ENCODE measurements at regions of chr9 and their contacts with region 1.

Region 1: DNA sequence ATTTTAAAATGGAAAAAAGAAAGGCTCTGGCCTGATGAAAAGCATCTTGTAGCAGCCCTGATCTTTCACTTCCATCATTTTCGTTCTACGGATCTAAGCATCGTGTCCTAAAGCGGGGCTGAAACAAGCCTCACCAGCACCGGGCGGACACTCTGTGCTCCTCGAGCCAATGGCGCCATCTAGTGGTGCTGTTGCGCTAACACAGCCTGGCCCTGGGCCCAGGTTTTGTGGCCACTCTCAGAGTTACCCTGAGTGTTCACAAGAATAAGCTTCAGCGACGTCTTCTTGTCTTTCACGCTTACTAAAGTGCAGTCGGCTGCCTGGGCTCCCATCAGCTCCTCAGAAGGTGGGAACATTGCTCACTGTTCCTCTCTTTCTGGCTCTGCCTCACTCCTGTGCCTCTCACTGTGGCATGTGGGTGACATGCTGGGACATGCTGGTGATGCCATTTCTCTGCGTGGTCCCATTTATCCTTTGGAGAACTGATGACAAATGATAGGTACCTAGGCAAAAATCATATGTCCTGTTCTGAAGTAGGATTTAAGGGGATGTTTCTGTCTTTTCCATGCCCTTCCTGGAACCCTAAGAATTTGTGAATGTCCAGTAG is 32.7 kb downstream of the DMRT3 start:
- DNase-seq: peak; percentile 56 to 81
- H3K4me3 ChIP-seq: no peak overlapping the region
- H3K4me3 Mint-ChIP-seq: no peak overlapping the region
- H3K27ac Mint-ChIP-seq: no peak overlapping the region
- H3K4me1 ChIP-seq: no peaks in the 10 kb centered on the region
- H3K4me1 Mint-ChIP-seq: no peaks in the 10 kb centered on the region
- H3K27me3 ChIP-seq: no peaks in the 10 kb centered on the region
- H3K27me3 Mint-ChIP-seq: peaks cover 3% of the 10 kb centered on the region
- CTCF ChIP-seq: peak; percentile 89 to 92

Region 2: GRCh38 chr9:347667-348292 is 661.4 kb before region 1 on chr9:
- CTCF ChIA-PET with region 1: no interaction called
- POLR2A ChIA-PET with region 1: no interaction called
- intact Hi-C with region 1: loop called (anchors 10 kb)
- DNase-seq: peak in 1 of 2 experiments; percentile 49
- H3K4me3 ChIP-seq: no peak overlapping the region
- H3K4me3 Mint-ChIP-seq: no peak overlapping the region
- H3K27ac Mint-ChIP-seq: no peak overlapping the region
- H3K4me1 ChIP-seq: no peaks in the 10 kb centered on the region
- H3K4me1 Mint-ChIP-seq: no peaks in the 10 kb centered on the region
- H3K27me3 ChIP-seq: no peaks in the 10 kb centered on the region
- H3K27me3 Mint-ChIP-seq: no peaks in the 10 kb centered on the region
- CTCF ChIP-seq: peak; percentile 67 to 77

Region 3: GRCh38 chr9:806285-807156 is 202.7 kb before region 1 on chr9:
- CTCF ChIA-PET with region 1: no interaction called
- POLR2A ChIA-PET with region 1: no interaction called
- intact Hi-C with region 1: loop called (anchors 5 kb)
- DNase-seq: peak in 1 of 2 experiments; percentile 27
- H3K4me3 ChIP-seq: no peak overlapping the region
- H3K4me3 Mint-ChIP-seq: no peak overlapping the region
- H3K27ac Mint-ChIP-seq: no peak overlapping the region
- H3K4me1 ChIP-seq: no peaks in the 10 kb centered on the region
- H3K4me1 Mint-ChIP-seq: peaks cover 5% of the 10 kb centered on the region
- H3K27me3 ChIP-seq: no peaks in the 10 kb centered on the region
- H3K27me3 Mint-ChIP-seq: no peaks in the 10 kb centered on the region
- CTCF ChIP-seq: peak; percentile 58 to 63

Region 4: GRCh38 chr9:826500-827280 is 182.5 kb before region 1 on chr9:
- CTCF ChIA-PET with region 1: no interaction called
- POLR2A ChIA-PET with region 1: no interaction called
- intact Hi-C with region 1: no loop called
- DNase-seq: no peak
- H3K4me3 ChIP-seq: no peak overlapping the region
- H3K4me3 Mint-ChIP-seq: no peak overlapping the region
- H3K27ac Mint-ChIP-seq: no peak overlapping the region
- H3K4me1 ChIP-seq: no peaks in the 10 kb centered on the region
- H3K4me1 Mint-ChIP-seq: no peaks in the 10 kb centered on the region
- H3K27me3 ChIP-seq: no peaks in the 10 kb centered on the region
- H3K27me3 Mint-ChIP-seq: no peaks in the 10 kb centered on the region
- CTCF ChIP-seq: no peak

Region 5: GRCh38 chr9:893843-894420 is 115.3 kb before region 1 on chr9:
- CTCF ChIA-PET with region 1: interaction called, 13 read pairs
- POLR2A ChIA-PET with region 1: no interaction called
- intact Hi-C with region 1: loop called (anchors 1 kb)
- DNase-seq: peak; percentile 66
- H3K4me3 ChIP-seq: no peak overlapping the region
- H3K4me3 Mint-ChIP-seq: no peak overlapping the region
- H3K27ac Mint-ChIP-seq: no peak overlapping the region
- H3K4me1 ChIP-seq: no peaks in the 10 kb centered on the region
- H3K4me1 Mint-ChIP-seq: peaks cover 6% of the 10 kb centered on the region
- H3K27me3 ChIP-seq: no peaks in the 10 kb centered on the region
- H3K27me3 Mint-ChIP-seq: no peaks in the 10 kb centered on the region
- CTCF ChIP-seq: peak; percentile 67 to 76

Region 6: GRCh38 chr9:899440-900184 is 109.6 kb before region 1 on chr9:
- CTCF ChIA-PET with region 1: interaction called, 13 read pairs
- POLR2A ChIA-PET with region 1: no interaction called
- intact Hi-C with region 1: loop called (anchors 1 kb)
- DNase-seq: peak in 1 of 2 experiments; percentile 35
- H3K4me3 ChIP-seq: no peak overlapping the region
- H3K4me3 Mint-ChIP-seq: peak overlapping the region; percentile 31
- H3K27ac Mint-ChIP-seq: no peak overlapping the region
- H3K4me1 ChIP-seq: peaks cover 4% of the 10 kb centered on the region; the same call in 1 of the 2 replicates
- H3K4me1 Mint-ChIP-seq: peaks cover 6% of the 10 kb centered on the region
- H3K27me3 ChIP-seq: no peaks in the 10 kb centered on the region
- H3K27me3 Mint-ChIP-seq: no peaks in the 10 kb centered on the region
- CTCF ChIP-seq: no peak

Region 7: DNA sequence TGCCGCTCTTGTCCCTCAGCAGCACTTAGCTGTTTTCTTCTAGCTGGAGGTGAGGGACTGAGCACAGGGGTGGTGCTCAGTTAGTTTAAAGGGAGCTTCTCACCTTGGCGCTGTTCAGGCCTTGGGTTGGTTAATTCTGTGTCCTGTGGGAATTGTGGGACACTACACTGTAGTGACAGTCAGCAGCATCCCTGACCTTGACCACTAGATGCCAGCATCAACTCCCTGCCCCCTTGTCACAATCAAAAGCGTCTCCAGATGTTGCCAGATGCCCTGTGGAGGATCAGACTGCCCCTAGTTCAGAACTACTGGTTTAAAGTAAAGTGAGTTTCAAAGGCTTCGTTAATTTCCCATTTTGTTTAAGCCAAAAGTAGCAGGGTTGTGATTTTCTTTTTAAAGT is 98.2 kb before region 1 on chr9:
- CTCF ChIA-PET with region 1: no interaction called
- POLR2A ChIA-PET with region 1: no interaction called
- intact Hi-C with region 1: loop called (anchors 5 kb)
- DNase-seq: peak; percentile 31 to 42
- H3K4me3 ChIP-seq: no peak overlapping the region
- H3K4me3 Mint-ChIP-seq: no peak overlapping the region
- H3K27ac Mint-ChIP-seq: no peak overlapping the region
- H3K4me1 ChIP-seq: no peaks in the 10 kb centered on the region
- H3K4me1 Mint-ChIP-seq: no peaks in the 10 kb centered on the region
- H3K27me3 ChIP-seq: no peaks in the 10 kb centered on the region; the same call in 1 of the 2 replicates
- H3K27me3 Mint-ChIP-seq: peaks cover 7% of the 10 kb centered on the region
- CTCF ChIP-seq: peak in 1 of 2 experiments; percentile 25

Region 8: GRCh38 chr9:942805-943580 is 66.2 kb before region 1 on chr9:
- CTCF ChIA-PET with region 1: no interaction called
- POLR2A ChIA-PET with region 1: no interaction called
- intact Hi-C with region 1: no loop called
- DNase-seq: no peak
- H3K4me3 ChIP-seq: no peak overlapping the region
- H3K4me3 Mint-ChIP-seq: no peak overlapping the region
- H3K27ac Mint-ChIP-seq: no peak overlapping the region
- H3K4me1 ChIP-seq: no peaks in the 10 kb centered on the region
- H3K4me1 Mint-ChIP-seq: no peaks in the 10 kb centered on the region
- H3K27me3 ChIP-seq: no peaks in the 10 kb centered on the region
- H3K27me3 Mint-ChIP-seq: peaks cover 5% of the 10 kb centered on the region
- CTCF ChIP-seq: no peak

Region 9: DNA sequence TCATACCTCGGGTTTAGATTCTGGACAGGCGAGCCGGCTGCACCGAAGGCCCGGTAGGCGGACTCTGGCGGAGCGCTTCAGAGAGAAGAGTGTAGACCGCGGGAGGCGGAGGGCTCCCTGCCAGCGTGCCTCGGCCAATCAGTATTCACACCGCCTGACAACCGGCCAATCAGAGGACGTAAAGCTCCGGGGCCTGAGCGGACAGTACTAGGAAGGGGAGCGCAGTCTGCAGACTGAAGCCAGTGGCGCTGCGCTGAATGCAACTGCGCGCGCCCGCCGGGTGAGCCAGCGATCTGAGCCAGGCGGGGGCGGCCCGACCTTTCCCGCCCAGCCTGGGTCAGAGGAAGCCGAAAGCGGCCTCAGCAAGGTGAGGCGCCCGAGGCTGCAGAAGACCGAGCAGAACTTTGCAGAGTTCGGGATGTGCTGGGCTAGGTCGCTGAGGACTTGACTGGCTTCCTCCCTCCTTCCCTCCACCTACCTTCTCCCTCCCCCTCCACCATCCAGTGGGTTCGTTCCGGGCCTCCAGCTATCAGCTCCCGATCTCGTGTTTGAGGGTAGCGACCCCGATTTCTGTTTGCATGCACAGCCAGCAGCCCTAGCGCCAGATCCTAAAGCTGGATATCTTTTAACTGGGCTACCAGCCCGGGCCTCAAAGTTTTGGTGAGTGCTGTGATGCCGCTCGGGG is 41.1 kb after region 1 on chr9 and contains the start of gene DMRT2:
- CTCF ChIA-PET with region 1: no interaction called
- POLR2A ChIA-PET with region 1: no interaction called
- intact Hi-C with region 1: no loop called
- DNase-seq: peak; percentile 92 to 94
- H3K4me3 ChIP-seq: peak within 1 kb of the TSS; percentile 48
- H3K4me3 Mint-ChIP-seq: peak within 1 kb of the TSS; percentile 77
- H3K27ac Mint-ChIP-seq: no peak within 1 kb of the TSS
- H3K4me1 ChIP-seq: peaks cover 4% of the 10 kb centered on the region; the same call in 1 of the 2 replicates
- H3K4me1 Mint-ChIP-seq: no peaks in the 10 kb centered on the region
- H3K27me3 ChIP-seq: no peaks in the 10 kb centered on the region
- H3K27me3 Mint-ChIP-seq: no peaks in the 10 kb centered on the region
- CTCF ChIP-seq: no peak
- total RNA-seq, gene DMRT2: 0.61 and 0.70 TPM in 2 replicates

Region 10: DNA sequence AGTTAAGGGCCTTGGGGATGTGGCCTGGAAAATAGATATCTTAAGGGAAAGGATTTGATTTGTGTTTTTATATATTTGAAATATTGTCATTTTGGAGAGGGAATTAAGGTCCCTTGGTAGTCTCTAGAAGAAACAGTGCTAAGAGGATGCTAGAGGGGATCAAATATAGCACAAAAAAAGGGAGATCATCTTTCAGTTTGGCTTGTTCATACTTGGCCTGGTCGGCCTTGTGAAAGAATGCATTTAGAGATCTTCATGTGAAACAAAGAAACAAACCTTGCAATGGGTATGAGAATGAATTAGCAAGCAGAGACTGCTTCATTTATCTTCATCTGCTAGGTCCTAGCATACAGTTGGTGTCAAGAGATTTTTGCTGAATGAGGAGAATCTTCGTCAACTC is 55.9 kb after region 1 on chr9:
- CTCF ChIA-PET with region 1: no interaction called
- POLR2A ChIA-PET with region 1: no interaction called
- intact Hi-C with region 1: no loop called
- DNase-seq: no peak
- H3K4me3 ChIP-seq: no peak overlapping the region
- H3K4me3 Mint-ChIP-seq: no peak overlapping the region
- H3K27ac Mint-ChIP-seq: no peak overlapping the region
- H3K4me1 ChIP-seq: no peaks in the 10 kb centered on the region
- H3K4me1 Mint-ChIP-seq: no peaks in the 10 kb centered on the region
- H3K27me3 ChIP-seq: no peaks in the 10 kb centered on the region
- H3K27me3 Mint-ChIP-seq: peaks cover 6% of the 10 kb centered on the region
- CTCF ChIP-seq: no peak

Measured in Caco-2 (cell line).